Posterior vena cava (tissue), 2 donors: ENCODE measurements at regions of chr14 and their contacts with region 1.

Region 1: GRCh38 chr14:93772263-93772662 is 16.0 kb downstream of the PRIMA1 start:
- DNase-seq: no peak

Region 2: GRCh38 chr14:92563359-92563758 is 1208.9 kb before region 1 on chr14:
- intact Hi-C with region 1: loop called in 1 of 2 experiments (anchors 5 kb)
- DNase-seq: no peak

Region 3: DNA sequence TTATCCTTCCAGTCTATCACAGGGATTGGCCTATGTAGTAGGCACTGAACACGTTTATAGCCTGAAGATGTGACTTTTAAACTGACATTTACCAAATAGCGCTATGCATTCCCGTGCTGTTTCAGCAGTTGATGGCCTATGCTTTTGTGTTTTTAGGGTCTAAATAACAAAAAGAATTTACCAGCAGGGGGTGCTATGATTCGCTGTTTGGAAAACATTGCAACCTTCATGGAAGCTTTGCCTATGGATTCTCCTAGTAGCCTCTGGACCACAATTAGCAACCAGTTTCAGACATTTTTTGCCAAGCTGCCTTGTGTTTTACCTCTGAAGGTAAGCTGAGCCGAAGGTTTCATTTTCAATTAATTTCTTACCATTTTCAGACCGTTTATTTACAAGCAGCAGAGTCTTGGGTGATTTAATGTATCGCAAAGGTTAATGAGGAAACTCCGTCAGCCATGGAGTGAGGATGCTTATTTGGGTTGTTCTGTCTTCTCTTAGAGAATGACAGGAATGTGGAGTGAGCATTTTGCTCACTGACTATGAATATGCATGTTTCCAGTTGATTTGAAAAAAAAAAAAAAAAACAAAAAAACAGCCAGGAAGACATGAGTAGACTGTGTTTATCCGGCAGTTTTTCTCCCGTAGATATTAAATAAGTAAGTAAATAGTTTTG is 117.0 kb before region 1 on chr14:
- intact Hi-C with region 1: no loop called
- DNase-seq: no peak

Region 4: DNA sequence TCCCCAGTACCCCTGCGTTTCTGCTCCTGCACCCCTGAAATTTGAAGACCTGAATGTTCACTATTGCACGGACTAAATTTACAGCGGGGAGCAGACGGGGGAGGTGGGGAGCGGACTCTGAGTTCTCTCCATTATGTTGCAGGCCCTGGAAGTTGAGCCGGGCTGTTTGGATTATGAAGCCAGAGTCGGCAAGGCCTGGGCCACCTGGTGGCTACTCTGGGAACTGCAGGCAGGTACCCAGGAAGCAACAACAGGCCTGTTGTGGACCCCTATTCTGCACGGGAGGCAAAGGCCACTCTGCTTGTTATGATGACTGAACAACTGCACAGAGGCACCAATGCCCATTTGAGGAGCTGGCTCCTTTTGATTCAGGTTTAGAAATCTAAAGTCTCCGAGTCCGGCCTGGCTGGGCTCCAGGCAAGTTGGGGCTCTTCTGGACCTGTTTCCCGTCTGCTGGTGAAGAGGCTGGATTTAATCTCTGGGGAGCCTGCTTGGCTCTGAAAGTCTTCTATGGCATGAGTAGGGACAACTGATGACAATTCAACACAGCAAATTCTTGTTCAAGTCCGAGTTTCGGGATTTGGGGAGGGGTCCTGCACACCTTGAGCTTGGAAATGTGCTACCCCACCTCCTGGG is 120.8 kb after region 1 on chr14:
- intact Hi-C with region 1: no loop called
- DNase-seq: peak; percentile 91